ENCODE measurements at regions of chr12 and their contacts with region 1.

Region 1: DNA sequence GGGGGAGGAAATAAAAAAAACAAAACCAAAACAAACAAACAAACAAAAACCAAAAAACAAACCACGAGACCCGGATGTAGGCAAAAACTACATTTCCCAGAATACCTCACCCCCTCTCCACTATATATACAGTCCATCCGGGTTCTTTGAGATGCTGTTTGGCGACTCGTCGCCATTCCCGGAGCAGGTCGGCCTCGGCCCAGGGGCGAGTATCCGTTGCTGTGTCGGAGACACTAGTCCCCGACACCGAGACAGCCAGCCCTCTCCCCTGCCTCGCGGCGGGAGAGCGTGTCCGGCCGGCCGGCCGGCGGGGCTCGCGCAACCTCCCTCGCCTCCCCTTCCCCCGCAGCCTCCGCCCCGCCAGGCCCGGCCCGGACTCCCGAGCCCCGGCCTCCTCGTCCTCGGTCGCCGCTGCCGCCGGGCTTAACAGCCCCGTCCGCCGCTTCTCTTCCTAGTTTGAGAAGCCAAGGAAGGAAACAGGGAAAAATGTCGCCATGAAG is at the start of gene RNF10:
- DNase-seq: peak; percentile 78
- H3K4me3 ChIP-seq: peak within 1 kb of the TSS; percentile 80 to 87 (median 83)
- H3K27ac ChIP-seq: peak within 1 kb of the TSS; percentile 74
- H3K4me1 ChIP-seq: peaks cover 49% of the 10 kb centered on the region
- H3K27me3 ChIP-seq: no peaks in the 10 kb centered on the region
- CTCF ChIP-seq: no peak
- total RNA-seq, gene RNF10: 104 to 152 TPM

Region 2: DNA sequence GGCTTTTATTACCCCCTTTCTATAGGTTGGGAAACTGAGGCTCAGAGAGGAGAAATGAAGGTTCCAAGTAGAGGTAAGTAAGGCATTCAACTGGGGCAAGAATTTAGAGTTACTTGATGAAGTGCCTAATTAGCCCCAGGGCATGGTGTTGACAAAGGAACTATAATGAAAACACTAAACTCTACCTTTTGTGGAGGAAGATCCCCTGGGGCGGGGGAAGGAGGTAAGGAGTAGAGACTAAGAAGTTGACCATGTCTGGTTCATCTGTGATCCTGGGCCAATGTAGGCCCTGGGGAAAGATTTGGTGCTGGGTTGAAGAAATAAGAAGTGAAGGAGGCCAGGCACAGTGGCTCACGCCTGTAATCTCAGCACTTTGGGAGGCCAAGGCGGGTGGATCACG is 112.6 kb before region 1 on chr12:
- CTCF ChIA-PET with region 1: no interaction called
- dilution Hi-C with region 1: no loop called
- in situ Hi-C with region 1: no loop called
- intact Hi-C with region 1: no loop called
- DNase-seq: no peak
- H3K4me3 ChIP-seq: no peak overlapping the region
- H3K27ac ChIP-seq: no peak overlapping the region
- H3K4me1 ChIP-seq: no peaks in the 10 kb centered on the region
- H3K27me3 ChIP-seq: no peaks in the 10 kb centered on the region
- CTCF ChIP-seq: no peak

Region 3: DNA sequence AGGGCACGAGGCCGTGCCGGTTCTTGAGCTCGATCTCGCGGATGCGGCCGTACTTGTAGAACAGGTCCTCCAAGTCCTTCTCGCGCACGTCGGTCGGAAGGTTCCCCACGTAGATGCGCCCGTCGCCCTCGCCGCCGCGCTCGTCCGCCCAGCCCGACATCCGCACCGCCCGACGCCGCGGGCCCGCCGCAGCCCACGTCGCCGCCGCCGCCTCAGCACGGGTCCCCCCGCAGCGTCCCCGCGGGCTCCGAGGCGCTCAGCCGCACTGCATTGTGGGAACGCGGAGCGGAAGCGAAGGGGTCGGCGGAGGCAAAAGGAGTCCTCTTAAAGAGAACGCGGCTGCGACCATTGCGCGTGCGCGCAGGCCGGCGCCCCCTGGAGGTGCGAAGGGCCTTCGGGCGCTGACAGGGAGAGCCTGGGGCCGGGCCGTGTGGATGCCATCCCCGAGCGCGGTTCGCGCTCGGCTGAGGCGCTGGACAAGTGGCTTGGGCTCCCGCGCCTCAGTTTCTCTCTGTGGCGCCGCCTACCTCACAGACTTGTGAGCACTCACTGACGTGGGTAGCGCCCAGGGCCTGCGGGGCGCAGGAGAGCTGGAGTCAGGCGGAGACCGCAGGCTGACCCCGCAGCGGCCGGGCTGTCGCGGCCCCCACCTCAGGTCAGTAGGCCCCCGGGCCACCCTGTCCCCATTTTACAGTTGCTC is 64.7 kb before region 1 on chr12 and contains the start of gene SRSF9:
- CTCF ChIA-PET with region 1: no interaction called
- dilution Hi-C with region 1: no loop called
- in situ Hi-C with region 1: no loop called
- intact Hi-C with region 1: loop called (anchors 2 kb)
- DNase-seq: peak; percentile 91
- H3K4me3 ChIP-seq: peak within 1 kb of the TSS; percentile 79 to 92 (median 79)
- H3K27ac ChIP-seq: peak within 1 kb of the TSS; percentile 64
- H3K4me1 ChIP-seq: peaks cover 16% of the 10 kb centered on the region
- H3K27me3 ChIP-seq: no peaks in the 10 kb centered on the region
- CTCF ChIP-seq: peak; percentile 62 to 93
- total RNA-seq, gene SRSF9: 84.7 to 205 TPM

Region 4: DNA sequence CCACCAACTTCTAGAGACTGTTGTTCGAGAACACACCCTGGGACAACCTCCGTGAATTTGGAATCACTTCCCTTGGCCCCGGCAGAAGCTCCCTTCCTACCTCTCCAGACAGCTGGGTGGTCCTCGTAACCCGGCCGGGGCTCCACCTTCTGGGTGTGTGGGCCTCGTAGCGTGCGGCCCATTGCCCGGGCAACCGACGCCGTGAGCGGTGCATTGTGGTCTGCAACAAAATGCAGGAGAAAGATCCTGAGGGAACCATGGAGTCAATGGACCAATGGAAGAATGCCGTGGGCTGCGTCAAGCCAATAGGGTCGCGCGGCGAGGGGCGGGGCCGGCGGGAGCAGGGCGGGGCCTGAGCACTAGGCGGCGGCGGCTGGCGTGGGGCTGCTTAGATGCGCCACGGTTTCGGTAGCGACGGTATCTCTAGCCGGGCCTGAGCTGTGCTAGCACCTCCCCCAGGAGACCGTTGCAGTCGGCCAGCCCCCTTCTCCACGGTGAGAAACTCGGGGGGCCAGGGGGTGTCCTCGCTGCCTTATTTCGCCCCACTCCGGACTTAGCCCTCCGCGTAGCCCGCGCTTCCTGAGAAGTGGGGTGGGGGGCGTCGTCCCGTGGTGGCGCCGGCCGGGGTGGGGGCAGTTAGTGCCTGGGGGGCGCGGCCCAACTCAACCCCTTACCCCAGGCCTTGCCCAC is 38.4 kb before region 1 on chr12 and contains the start of gene DYNLL1:
- CTCF ChIA-PET with region 1: no interaction called
- dilution Hi-C with region 1: loop called (anchors 5 kb)
- in situ Hi-C with region 1: no loop called
- intact Hi-C with region 1: loop called (anchors 2 kb)
- DNase-seq: peak; percentile 94
- H3K4me3 ChIP-seq: peak within 1 kb of the TSS; percentile 73 to 81 (median 74)
- H3K27ac ChIP-seq: peak within 1 kb of the TSS; percentile 80
- H3K4me1 ChIP-seq: peaks cover 14% of the 10 kb centered on the region
- H3K27me3 ChIP-seq: no peaks in the 10 kb centered on the region
- CTCF ChIP-seq: no peak
- total RNA-seq, gene DYNLL1: 210 to 390 TPM

Region 5: DNA sequence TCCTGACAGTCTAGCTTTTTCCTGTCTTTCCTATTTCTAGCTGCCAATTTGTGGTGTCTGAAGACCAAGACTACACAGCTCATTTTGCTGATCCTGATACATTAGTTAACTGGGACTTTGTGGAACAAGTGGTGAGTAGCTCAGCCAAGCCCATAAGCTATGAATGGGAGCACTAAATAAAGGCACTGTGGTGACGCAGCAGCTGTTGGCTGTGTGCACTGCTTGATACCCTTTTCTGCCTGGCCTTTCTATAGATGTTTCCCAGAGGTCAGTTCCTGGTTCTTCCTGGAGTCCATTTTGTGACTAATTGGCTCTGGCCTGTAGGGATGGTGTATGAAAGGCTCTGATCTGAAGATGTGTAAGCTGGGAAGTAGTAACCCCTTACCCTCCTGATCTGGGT is 20.4 kb after region 1 on chr12:
- CTCF ChIA-PET with region 1: no interaction called
- dilution Hi-C with region 1: no loop called
- in situ Hi-C with region 1: no loop called
- intact Hi-C with region 1: loop called (anchors 1 kb)
- DNase-seq: no peak
- H3K4me3 ChIP-seq: no peak overlapping the region
- H3K27ac ChIP-seq: no peak overlapping the region
- H3K4me1 ChIP-seq: peaks cover 3% of the 10 kb centered on the region
- H3K27me3 ChIP-seq: no peaks in the 10 kb centered on the region
- CTCF ChIP-seq: no peak

Region 6: DNA sequence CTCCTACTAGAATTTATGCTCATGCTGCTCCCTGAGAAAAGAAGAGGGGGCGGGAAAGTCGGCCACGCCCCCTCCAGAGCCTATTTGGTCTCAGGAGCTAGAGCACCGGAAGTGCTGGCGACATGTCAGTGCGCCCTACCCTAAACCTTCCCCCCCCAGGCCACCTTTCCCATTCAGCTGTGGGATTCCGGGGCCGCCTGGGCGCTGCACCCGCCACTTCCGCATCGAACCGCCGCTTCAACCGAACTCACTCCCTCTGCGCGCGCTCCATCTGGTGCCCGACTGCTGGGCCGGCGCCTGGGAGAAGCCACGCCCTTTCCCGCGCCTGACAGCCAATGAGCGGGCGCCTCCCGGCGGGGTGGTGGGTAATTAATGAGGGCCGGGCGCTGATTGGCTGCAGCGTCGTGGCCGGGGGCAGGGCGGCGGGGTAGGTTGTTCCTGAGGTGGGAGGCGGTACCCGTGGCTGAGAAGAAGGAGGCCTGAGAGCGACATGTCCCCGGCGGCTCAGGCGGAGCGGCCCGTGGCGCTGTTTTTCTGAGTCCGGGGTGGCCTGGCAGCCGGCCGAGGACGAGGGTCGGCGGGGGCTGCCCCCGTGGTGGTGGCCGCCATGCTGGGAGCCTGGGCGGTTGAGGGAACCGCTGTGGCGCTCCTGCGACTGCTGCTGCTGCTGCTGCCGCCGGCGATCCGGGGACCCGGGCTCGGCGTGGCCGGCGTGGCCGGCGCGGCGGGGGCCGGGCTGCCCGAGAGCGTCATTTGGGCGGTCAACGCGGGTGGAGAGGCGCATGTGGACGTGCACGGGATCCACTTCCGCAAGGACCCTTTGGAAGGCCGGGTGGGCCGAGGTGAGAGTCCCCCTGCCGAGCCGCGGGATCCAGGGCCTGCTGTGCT is 152.7 kb after region 1 on chr12 and contains the start of gene MLEC:
- CTCF ChIA-PET with region 1: no interaction called
- dilution Hi-C with region 1: no loop called
- in situ Hi-C with region 1: no loop called
- intact Hi-C with region 1: loop called (anchors 1 kb)
- DNase-seq: peak; percentile 98
- H3K4me3 ChIP-seq: peak within 1 kb of the TSS; percentile 73 to 98 (median 82)
- H3K27ac ChIP-seq: peak within 1 kb of the TSS; percentile 89
- H3K4me1 ChIP-seq: peaks cover 28% of the 10 kb centered on the region
- H3K27me3 ChIP-seq: no peaks in the 10 kb centered on the region
- CTCF ChIP-seq: peak in 1 of 2 donors; percentile 24
- total RNA-seq, gene MLEC: 64.7 to 114 TPM

Region 7: GRCh38 chr12:120737557-120738251 is 203.5 kb after region 1 on chr12:
- CTCF ChIA-PET with region 1: no interaction called
- dilution Hi-C with region 1: no loop called
- in situ Hi-C with region 1: no loop called
- intact Hi-C with region 1: no loop called
- DNase-seq: no peak
- H3K4me3 ChIP-seq: no peak overlapping the region
- H3K27ac ChIP-seq: no peak overlapping the region
- H3K4me1 ChIP-seq: no peaks in the 10 kb centered on the region
- H3K27me3 ChIP-seq: no peaks in the 10 kb centered on the region
- CTCF ChIP-seq: peak; percentile 5 to 41

Measured in mammary epithelial cell (primary cell).